HCT116 (cell line): ENCODE measurements at regions of chr12 and their contacts with region 1.

Region 1: GRCh38 chr12:53321074-53321814 is at the start of gene AAAS:
- DNase-seq: peak; percentile 88
- ATAC-seq: peak; percentile 88
- H3K4me3 ChIP-seq: peak within 1 kb of the TSS; percentile 90
- H3K27ac ChIP-seq: peak within 1 kb of the TSS; percentile 89
- H3K4me1 ChIP-seq: peaks cover 25 to 47% of the 10 kb centered on the region in 2 experiments
- H3K27me3 ChIP-seq: no peaks in the 10 kb centered on the region
- CTCF ChIP-seq: peak; percentile 91 to 98 (median 96)
- POLR2A ChIP-seq: peak; percentile 93
- RAD21 ChIP-seq: peak; percentile 54
- total RNA-seq, gene AAAS: 87.9 TPM

Region 2: DNA sequence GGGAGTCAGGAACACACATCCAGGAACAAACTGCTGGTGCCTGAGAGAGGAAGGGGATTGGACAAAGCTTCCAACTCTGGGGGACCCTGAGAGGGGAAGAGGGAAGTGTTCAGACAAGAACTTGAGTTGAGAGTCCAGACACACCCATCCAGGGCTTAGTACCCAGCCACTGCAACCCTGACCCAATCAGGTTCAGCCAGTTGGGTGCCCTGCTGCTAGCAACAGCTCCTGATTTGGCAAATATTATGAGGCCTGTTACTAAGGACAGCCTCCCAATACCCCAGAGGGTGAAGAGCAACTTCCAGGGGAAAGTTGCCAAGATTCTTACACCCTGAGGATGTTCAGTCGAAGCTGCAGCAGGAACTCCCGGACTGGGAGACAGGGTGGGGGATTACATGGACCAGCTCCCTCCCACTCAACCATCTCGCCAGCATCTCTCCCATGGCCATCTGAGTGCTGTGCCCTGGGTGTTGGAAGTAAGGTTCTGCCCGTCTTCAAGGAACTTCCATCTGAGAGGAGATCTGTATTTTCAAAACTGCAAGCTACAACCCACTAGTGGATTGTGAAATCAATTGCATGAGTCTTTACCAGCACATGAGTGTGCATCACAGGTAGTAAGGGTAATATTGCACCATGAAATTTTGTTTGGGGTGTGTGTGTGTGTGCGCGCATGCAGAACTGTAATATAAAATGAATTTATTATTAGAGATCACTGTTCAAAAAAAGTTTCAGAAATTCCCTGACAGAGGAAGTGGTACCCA is 461.0 kb before region 1 on chr12:
- CTCF ChIA-PET with region 1: no interaction called
- POLR2A ChIA-PET with region 1: no interaction called
- RAD21 ChIA-PET with region 1: no interaction called
- intact Hi-C with region 1: no loop called
- DNase-seq: no peak
- ATAC-seq: peak; percentile 61; the same call in 1 of the 2 replicates
- H3K4me3 ChIP-seq: no peak overlapping the region
- H3K27ac ChIP-seq: no peak overlapping the region
- H3K4me1 ChIP-seq: peaks cover 2 to 22% of the 10 kb centered on the region in 2 experiments; a peak in 3 of 4 replicates
- H3K27me3 ChIP-seq: no peaks in the 10 kb centered on the region
- CTCF ChIP-seq: no peak
- POLR2A ChIP-seq: no peak
- RAD21 ChIP-seq: no peak

Region 3: DNA sequence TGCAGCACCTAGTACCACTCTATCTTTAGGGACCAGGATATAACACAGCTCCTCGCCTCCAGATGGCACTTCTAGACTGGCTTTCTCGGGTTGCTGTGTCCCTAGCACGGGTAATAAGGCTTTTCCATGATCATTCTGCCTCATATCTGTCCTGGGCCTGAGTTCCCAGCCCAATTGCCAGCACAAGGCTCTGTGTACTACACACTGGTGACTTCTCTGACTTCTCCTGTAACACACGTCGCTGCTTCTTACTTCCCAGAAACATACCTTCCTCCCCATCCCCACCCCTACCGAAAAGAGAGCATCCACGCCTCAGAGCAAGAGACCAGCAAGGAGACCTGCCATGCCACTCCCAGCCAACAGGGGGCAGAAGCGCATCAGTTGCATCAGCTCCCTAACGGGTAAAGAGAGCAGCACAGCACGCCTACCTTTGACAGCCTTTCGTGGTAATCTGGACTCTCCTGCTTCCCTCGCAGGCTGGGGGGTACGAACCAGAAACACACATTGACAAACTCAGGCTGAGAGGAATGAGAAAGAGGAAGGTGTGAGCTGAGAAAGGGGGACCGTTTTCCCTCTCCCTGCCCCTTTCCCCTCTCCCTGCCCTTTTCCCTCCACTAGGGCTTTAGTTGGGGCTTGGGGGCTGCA is 161.9 kb before region 1 on chr12:
- CTCF ChIA-PET with region 1: interaction called, 12 read pairs
- POLR2A ChIA-PET with region 1: no interaction called
- RAD21 ChIA-PET with region 1: interaction called in 1 of 2 experiments, 4 read pairs
- intact Hi-C with region 1: no loop called
- DNase-seq: peak; percentile 72
- ATAC-seq: peak; percentile 96
- H3K4me3 ChIP-seq: peak overlapping the region; percentile 16 to 30; a peak in 3 of 4 replicates
- H3K27ac ChIP-seq: peak overlapping the region; percentile 3; the same call in 1 of the 2 replicates
- H3K4me1 ChIP-seq: peaks cover 3 to 15% of the 10 kb centered on the region in 2 experiments; a peak in 3 of 4 replicates
- H3K27me3 ChIP-seq: no peaks in the 10 kb centered on the region
- CTCF ChIP-seq: peak; percentile 94 to 100 (median 99)
- POLR2A ChIP-seq: no peak
- RAD21 ChIP-seq: peak; percentile 77

Region 4: GRCh38 chr12:53220801-53221202 is 100.4 kb before region 1 on chr12:
- CTCF ChIA-PET with region 1: interaction called, 43 read pairs
- POLR2A ChIA-PET with region 1: interaction called, 3 read pairs
- RAD21 ChIA-PET with region 1: interaction called in 1 of 2 experiments, 3 read pairs
- intact Hi-C with region 1: no loop called
- DNase-seq: peak; percentile 83
- ATAC-seq: peak; percentile 77
- H3K4me3 ChIP-seq: peak overlapping the region; percentile 72 to 88
- H3K27ac ChIP-seq: peak overlapping the region; percentile 99
- H3K4me1 ChIP-seq: peaks cover 58 to 87% of the 10 kb centered on the region in 2 experiments
- H3K27me3 ChIP-seq: no peaks in the 10 kb centered on the region
- CTCF ChIP-seq: no peak
- POLR2A ChIP-seq: peak; percentile 4
- RAD21 ChIP-seq: no peak

Region 5: GRCh38 chr12:53352331-53353256 is 31.4 kb after region 1 on chr12:
- CTCF ChIA-PET with region 1: interaction called, 18 read pairs
- POLR2A ChIA-PET with region 1: interaction called, 3 read pairs
- RAD21 ChIA-PET with region 1: interaction called in 1 of 2 experiments, 4 read pairs
- intact Hi-C with region 1: no loop called
- DNase-seq: peak; percentile 86
- ATAC-seq: peak; percentile 97
- H3K4me3 ChIP-seq: no peak overlapping the region
- H3K27ac ChIP-seq: peak overlapping the region; percentile 34; the same call in 1 of the 2 replicates
- H3K4me1 ChIP-seq: peaks cover 9 to 36% of the 10 kb centered on the region in 2 experiments; a peak in 3 of 4 replicates
- H3K27me3 ChIP-seq: no peaks in the 10 kb centered on the region
- CTCF ChIP-seq: peak; percentile 82 to 96 (median 89)
- POLR2A ChIP-seq: no peak
- RAD21 ChIP-seq: peak; percentile 99

Region 6: GRCh38 chr12:53476769-53477209 is 155.5 kb after region 1 on chr12:
- CTCF ChIA-PET with region 1: interaction called, 10 read pairs
- POLR2A ChIA-PET with region 1: interaction called, 3 read pairs
- RAD21 ChIA-PET with region 1: no interaction called
- intact Hi-C with region 1: no loop called
- DNase-seq: no peak
- ATAC-seq: peak; percentile 67
- H3K4me3 ChIP-seq: no peak overlapping the region
- H3K27ac ChIP-seq: 0 out of 2 replicates have a peak overlapping the region, but pooled peaks have one; percentile 5
- H3K4me1 ChIP-seq: peaks cover 0 to 32% of the 10 kb centered on the region in 2 experiments; a peak in 2 of 4 replicates
- H3K27me3 ChIP-seq: no peaks in the 10 kb centered on the region
- CTCF ChIP-seq: peak; percentile 25 to 53 (median 39); a peak in 5 of 6 replicates
- POLR2A ChIP-seq: no peak
- RAD21 ChIP-seq: 0 out of 2 replicates have a peak, but pooled peaks have one; percentile 28

Region 7: DNA sequence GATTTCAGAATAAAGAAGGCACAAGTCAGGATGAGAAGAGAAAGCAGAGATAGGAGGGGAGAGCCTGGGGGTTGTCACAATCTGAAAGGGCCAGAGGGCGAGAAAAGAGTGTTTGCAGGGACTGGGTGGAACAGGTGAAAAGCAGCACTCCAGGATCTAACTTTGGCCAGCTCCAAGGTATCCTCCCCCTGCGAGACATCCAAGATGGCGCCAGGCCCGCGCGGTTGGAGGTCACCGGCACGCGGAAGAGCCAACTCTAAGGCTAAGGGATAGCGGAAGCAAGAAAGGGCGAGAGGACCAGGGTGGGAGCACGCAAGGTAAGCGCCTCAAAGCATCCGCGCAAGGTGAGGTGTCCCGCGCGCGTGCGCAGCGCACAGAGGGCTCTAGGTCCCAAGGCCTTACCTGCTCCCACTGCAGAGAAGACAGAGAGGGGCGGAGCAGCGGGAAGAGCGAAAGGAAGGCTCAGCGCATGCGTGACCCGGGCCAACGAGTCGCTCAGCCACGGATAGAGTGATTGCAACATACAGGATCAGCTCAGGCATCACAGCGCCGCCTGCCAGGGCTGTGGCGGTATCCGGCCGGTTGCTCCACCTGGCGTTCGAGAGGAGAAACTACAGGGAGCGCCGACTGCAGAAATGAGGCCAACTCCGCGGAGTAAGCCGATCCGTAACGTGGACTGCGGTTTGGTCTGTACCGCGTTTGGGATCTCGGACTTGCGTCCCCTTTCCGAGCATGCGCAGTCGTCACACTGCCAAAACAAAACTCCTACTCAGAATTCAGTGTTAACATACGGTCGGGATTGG is 354.6 kb after region 1 on chr12 and contains the start of gene ATP5MC2:
- CTCF ChIA-PET with region 1: interaction called, 3 read pairs
- POLR2A ChIA-PET with region 1: no interaction called
- RAD21 ChIA-PET with region 1: no interaction called
- intact Hi-C with region 1: loop called (anchors 10 kb)
- DNase-seq: peak; percentile 98
- ATAC-seq: peak; percentile 93
- H3K4me3 ChIP-seq: peak within 1 kb of the TSS; percentile 78 to 91
- H3K27ac ChIP-seq: peak within 1 kb of the TSS; percentile 79
- H3K4me1 ChIP-seq: peaks cover 9 to 42% of the 10 kb centered on the region in 2 experiments
- H3K27me3 ChIP-seq: no peaks in the 10 kb centered on the region
- CTCF ChIP-seq: peak; percentile 99 to 100 (median 99)
- POLR2A ChIP-seq: peak; percentile 86
- RAD21 ChIP-seq: peak; percentile 97
- total RNA-seq, gene ATP5MC2: 304 TPM

Region 8: DNA sequence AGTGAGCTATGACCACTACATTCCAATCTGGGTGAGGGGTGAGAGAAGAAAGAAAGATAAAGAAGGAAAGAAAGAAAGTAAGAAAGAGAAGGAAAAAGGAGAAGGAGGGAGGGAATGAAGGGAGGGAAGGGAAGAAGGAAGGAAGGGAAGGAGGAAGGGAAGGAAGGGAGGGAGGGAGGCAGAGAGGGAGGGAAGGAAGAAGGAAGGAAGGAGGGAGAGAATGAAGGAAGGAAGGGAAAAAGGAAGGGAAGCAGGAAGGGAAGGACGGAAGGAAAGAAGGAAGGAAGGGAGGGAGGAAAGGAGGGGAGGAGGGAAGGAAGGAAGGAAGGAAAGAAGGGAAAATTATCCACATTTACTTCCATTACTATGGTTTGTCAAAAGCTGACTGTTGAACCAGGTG is 578.0 kb after region 1 on chr12:
- CTCF ChIA-PET with region 1: no interaction called
- POLR2A ChIA-PET with region 1: no interaction called
- RAD21 ChIA-PET with region 1: no interaction called
- intact Hi-C with region 1: no loop called
- DNase-seq: no peak
- ATAC-seq: no peak
- H3K4me3 ChIP-seq: no peak overlapping the region
- H3K27ac ChIP-seq: no peak overlapping the region
- H3K4me1 ChIP-seq: no peaks in the 10 kb centered on the region
- H3K27me3 ChIP-seq: peaks cover 32% of the 10 kb centered on the region
- CTCF ChIP-seq: no peak
- POLR2A ChIP-seq: no peak
- RAD21 ChIP-seq: no peak